CD4-positive, alpha-beta T cell (primary cell): ENCODE measurements at regions of chrX and their contacts with region 1.

Region 1: GRCh38 chrX:153927922-153928760 is 2.1 kb upstream of the ARHGAP4 start:
- DNase-seq: peak; percentile 79 to 98 (median 92)
- ATAC-seq: peak; percentile 72
- H3K4me3 ChIP-seq: peak overlapping the region; percentile 83
- H3K4me3 Mint-ChIP-seq: peak overlapping the region; percentile 96
- H3K27ac ChIP-seq: peak overlapping the region; percentile 93 to 97
- H3K27ac Mint-ChIP-seq: peak overlapping the region; percentile 99
- H3K4me1 ChIP-seq: peaks cover 51% of the 10 kb centered on the region
- H3K4me1 Mint-ChIP-seq: peaks cover 39% of the 10 kb centered on the region
- H3K27me3 ChIP-seq: no peaks in the 10 kb centered on the region
- H3K27me3 Mint-ChIP-seq: no peaks in the 10 kb centered on the region
- CTCF ChIP-seq: no peak

Region 2: DNA sequence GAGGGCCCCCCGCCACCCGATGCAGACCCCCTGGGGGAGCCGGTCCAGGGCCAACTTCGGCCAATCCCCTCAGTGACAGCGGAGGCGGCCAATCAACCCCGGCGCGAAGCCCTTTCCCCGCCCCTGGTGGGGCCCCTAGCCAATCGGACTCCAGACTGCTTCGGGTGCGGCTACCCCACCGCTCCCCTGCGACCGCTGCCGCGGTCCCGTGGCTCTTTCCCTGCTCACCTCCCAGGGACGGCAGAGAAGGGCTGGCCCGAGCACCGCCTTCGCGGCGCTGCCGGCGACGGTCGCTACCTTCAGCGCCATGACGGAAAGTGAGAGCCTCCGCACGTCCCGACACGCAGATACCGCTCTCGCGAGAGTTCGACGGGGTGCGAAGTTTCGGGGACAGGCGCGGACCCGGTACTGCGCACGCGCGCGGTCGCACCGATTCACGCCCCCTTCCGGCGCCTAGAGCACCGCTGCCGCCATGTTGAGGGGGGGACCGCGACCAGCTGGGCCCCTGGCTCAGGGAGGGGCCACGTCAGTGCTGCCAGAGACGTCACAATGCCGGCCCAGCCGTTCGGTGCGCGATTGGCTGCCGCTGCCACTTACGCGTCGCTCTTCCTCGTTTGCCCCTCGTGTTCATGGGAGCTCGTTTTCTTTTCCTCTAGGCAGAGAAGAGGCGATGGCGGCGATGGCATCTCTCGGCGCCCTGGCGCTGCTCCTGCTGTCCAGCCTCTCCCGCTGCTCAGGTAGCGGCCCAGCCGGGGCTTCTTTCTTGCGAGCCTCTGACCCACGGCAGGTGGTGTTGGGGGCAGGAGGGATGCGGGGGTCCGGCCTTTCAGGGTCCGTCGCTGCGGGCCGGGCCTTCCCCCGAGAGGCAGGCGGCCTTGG is 133.9 kb before region 1 on chrX and contains the starts of genes IDH3G and SSR4:
- CTCF ChIA-PET with region 1: interaction called, 3 read pairs
- POLR2A ChIA-PET with region 1: interaction called, 29 read pairs
- intact Hi-C with region 1: loop called in 1 of 2 experiments (anchors 2 kb)
- DNase-seq: peak; percentile 84 to 97 (median 91)
- ATAC-seq: peak; percentile 91
- H3K4me3 ChIP-seq: peak within 1 kb of the TSS; percentile 89
- H3K4me3 Mint-ChIP-seq: peak within 1 kb of the TSS; percentile 97
- H3K27ac ChIP-seq: peak within 1 kb of the TSS; percentile 83 to 92
- H3K27ac Mint-ChIP-seq: peak within 1 kb of the TSS; percentile 89
- H3K4me1 ChIP-seq: peaks cover 44% of the 10 kb centered on the region
- H3K4me1 Mint-ChIP-seq: peaks cover 14% of the 10 kb centered on the region
- H3K27me3 ChIP-seq: no peaks in the 10 kb centered on the region
- H3K27me3 Mint-ChIP-seq: no peaks in the 10 kb centered on the region
- CTCF ChIP-seq: no peak
- total RNA-seq, gene IDH3G: 46.8 to 47.3 TPM
- total RNA-seq, gene SSR4: 171 to 173 TPM

Region 3: DNA sequence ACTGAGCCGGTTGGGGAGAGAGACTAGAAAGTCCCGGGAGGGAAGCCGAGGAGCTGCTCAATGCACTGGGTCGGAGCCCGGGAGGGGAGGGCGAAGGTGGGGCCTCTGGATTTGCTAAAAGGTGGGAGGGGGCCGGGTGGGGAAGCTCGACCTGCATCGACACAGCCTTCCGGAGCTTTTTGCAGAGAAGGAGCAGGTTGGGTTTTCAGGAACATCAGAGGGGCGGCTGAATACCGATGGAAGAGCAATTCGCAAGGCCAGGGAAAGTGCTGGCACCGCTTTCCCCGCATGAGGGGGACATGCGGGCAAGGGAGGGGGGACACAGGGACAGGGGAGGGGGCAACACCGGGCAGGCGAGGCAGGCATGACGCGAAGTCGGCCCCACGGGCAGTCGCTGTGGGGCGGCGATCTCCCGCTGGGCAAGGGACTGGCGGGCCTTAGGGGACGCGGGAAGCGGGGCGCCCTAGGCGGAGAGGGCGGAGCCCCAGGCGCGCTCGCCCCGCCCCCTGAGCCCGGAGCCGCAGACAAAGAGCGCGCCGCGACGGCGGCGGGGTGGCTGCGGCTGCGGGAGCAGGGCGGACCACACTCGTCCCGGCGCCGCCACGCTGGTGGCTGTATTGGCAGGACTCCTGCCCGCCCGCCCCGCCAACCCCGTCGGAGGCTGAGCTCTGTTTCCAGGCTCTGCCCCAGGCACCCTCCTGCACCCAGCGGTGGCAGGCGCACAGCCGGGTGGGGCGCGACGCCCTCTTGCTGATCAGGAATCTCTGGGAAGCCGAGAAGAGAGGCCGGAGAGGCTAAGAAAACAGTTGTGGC is 109.4 kb before region 1 on chrX:
- CTCF ChIA-PET with region 1: no interaction called
- POLR2A ChIA-PET with region 1: interaction called, 11 read pairs
- intact Hi-C with region 1: no loop called
- DNase-seq: peak in 13 of 14 experiments; percentile 13 to 81 (median 49)
- ATAC-seq: peak; percentile 67
- H3K4me3 ChIP-seq: peak overlapping the region; percentile 49
- H3K4me3 Mint-ChIP-seq: peak overlapping the region; percentile 66
- H3K27ac ChIP-seq: no peak overlapping the region
- H3K27ac Mint-ChIP-seq: no peak overlapping the region
- H3K4me1 ChIP-seq: peaks cover 78% of the 10 kb centered on the region
- H3K4me1 Mint-ChIP-seq: peaks cover 49% of the 10 kb centered on the region
- H3K27me3 ChIP-seq: no peaks in the 10 kb centered on the region
- H3K27me3 Mint-ChIP-seq: no peaks in the 10 kb centered on the region
- CTCF ChIP-seq: no peak

Region 4: DNA sequence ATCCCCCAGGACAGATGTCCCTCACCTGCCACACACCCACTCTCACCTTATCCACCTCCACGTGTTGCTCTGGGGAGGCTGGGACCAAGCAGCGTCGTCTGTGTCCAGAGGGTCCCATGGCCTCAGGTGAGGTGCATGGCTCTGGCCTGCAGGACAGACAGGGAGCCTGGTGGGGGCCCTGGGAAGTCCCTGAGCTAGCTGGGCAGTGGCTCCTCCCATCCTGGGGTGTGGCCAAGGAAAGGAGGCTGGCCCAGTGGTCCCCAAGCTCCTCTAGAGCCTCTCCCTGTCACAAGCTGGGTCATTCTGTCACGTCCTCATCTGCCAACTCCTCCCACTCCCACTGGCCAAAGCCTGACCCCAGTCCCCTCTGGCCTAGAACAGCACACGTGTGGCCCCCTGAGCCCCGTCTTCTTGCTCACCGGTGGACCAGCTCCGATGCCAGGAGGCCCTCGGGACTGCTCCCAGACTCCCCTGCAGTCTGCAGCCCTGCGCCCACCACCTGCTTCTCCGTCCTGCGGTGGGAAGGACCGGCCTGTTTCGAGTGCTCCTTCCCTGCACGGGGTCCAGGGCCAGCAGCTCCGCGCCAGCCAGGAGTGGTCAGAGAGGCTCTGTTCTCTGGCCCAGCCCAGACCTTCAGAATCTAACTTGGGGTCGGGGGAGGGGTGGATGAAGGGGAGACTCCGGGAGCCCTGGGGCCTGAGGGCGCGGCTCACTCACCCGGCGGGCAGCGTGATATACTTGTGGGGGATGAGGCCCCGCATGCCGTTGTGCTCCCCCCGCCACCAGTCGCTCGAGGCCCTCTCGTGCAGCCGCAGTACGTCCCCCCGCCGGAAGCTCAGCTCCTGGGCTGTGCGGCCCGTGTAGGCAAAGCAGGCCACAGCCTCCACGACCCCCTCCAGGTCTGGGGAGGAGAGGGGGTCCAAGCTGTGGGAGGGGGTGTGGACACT is 18.8 kb before region 1 on chrX:
- CTCF ChIA-PET with region 1: interaction called, 4 read pairs
- POLR2A ChIA-PET with region 1: interaction called, 63 read pairs
- intact Hi-C with region 1: loop called in 1 of 2 experiments (anchors 1 kb)
- DNase-seq: peak in 1 of 14 experiments; percentile 7
- ATAC-seq: no peak
- H3K4me3 ChIP-seq: no peak overlapping the region
- H3K4me3 Mint-ChIP-seq: no peak overlapping the region
- H3K27ac ChIP-seq: no peak overlapping the region
- H3K27ac Mint-ChIP-seq: no peak overlapping the region
- H3K4me1 ChIP-seq: peaks cover 33% of the 10 kb centered on the region
- H3K4me1 Mint-ChIP-seq: peaks cover 23% of the 10 kb centered on the region
- H3K27me3 ChIP-seq: no peaks in the 10 kb centered on the region
- H3K27me3 Mint-ChIP-seq: no peaks in the 10 kb centered on the region
- CTCF ChIP-seq: no peak

Region 5: GRCh38 chrX:153947009-153947769 is 19.0 kb after region 1 on chrX:
- CTCF ChIA-PET with region 1: interaction called, 101 read pairs
- POLR2A ChIA-PET with region 1: interaction called, 196 read pairs
- intact Hi-C with region 1: loop called (anchors 1 kb)
- DNase-seq: peak; percentile 62 to 89 (median 74)
- ATAC-seq: peak; percentile 89
- H3K4me3 ChIP-seq: no peak overlapping the region
- H3K4me3 Mint-ChIP-seq: peak overlapping the region; percentile 39
- H3K27ac ChIP-seq: no peak overlapping the region
- H3K27ac Mint-ChIP-seq: peak overlapping the region; percentile 57
- H3K4me1 ChIP-seq: peaks cover 47% of the 10 kb centered on the region
- H3K4me1 Mint-ChIP-seq: peaks cover 10% of the 10 kb centered on the region
- H3K27me3 ChIP-seq: no peaks in the 10 kb centered on the region
- H3K27me3 Mint-ChIP-seq: no peaks in the 10 kb centered on the region
- CTCF ChIP-seq: peak; percentile 84